ENCODE measurements at regions of chr5 and their contacts with region 1.

Region 1: DNA sequence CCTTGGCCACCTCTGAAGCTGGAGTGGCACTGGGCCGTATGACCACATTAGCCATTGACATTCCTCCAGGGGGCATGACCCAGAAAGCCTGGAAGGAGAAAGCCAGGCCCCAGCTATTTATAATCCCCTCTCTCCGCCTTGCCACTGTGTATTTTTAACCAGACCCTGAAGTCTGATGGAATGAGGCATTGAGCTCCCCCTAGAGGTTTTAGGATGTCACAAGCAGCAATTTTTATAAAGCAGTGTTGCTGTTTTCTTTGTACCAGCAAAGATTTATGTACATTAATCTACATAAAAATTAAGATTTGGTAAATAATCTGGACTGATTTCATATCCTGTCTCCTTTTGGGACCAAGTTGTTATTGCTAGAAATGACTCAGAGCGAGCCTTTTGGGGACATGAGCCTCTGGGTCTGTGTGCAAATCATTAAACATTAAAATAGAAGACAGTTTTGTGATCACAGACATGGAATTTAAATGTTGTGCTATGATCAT is 127.1 kb downstream of the TRIO start:
- DNase-seq: no peak
- H3K4me3 Mint-ChIP-seq: no peak overlapping the region
- H3K27ac Mint-ChIP-seq: no peak overlapping the region
- H3K4me1 Mint-ChIP-seq: no peaks in the 10 kb centered on the region
- H3K27me3 Mint-ChIP-seq: peaks cover 26% of the 10 kb centered on the region

Region 2: DNA sequence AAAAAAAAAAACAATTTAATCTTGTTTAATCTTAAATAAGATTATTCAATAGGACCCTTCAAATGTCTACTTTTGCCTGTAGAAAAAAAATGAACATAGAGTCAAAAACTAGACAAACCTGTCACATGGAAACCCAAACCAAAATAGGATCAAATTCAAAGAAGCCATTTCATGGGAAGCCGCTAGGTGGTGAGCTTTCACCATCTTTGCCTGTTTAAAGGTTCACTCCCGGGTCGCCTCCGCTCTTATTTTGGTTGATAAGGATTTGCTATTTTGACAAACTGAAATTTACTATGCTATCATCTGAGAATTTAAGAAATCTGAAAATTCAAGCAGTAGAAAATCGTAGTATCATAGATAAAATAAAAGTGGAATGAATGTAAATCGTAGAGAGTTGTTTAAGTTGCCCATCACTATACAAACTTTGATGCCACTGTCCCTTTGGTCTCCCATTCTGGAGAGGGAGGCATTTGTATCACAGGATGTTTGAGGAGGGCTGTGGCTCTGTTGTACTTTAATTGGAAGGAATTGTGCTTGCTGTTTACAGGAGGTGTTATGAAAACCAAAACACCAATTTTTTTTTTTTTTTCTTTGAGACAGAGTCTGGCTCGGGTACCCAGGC is 282.3 kb before region 1 on chr5:
- CTCF ChIA-PET with region 1: interaction called, 8 read pairs
- POLR2A ChIA-PET with region 1: no interaction called
- intact Hi-C with region 1: loop called (anchors 1 kb)
- DNase-seq: peak; percentile 43
- H3K4me3 Mint-ChIP-seq: no peak overlapping the region
- H3K27ac Mint-ChIP-seq: no peak overlapping the region
- H3K4me1 Mint-ChIP-seq: no peaks in the 10 kb centered on the region
- H3K27me3 Mint-ChIP-seq: no peaks in the 10 kb centered on the region

Region 3: DNA sequence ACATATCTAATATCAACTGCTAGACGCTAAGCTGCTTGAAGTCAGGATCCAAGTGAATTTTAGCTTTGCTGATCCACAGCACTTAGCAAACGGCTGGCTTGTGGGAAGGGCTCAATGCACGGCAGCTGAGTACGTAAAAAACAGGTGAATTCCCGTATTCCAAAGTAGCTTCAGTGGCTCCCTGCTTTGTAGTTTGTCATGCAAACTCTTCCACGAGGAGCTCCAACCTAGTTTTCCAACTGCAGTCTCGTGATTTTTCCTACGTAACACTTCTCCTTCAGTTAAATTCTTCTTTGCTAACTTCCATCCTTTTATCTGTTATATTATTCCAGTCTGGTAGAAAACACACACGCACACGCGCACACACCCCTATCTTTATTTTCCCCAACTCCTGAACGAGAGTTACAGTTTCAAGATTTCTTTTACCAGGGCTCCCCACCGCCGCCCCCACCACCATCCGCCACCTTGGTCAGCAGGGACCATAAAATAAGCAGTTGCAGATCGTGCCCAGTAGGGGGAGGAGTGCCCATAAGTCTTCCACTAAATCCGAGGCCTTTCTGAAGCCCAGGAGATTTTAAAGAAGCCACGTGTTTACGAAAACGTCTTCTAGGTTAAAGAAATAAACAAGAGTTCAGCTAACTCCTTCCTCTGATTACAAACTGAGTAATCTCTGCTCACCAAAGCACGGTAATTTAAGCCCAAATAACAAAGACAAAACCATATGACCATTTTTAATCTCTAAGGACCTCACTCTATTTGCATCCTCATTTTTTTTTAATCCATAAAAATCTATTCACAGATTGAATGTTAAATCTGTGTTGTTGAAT is 161.9 kb before region 1 on chr5:
- CTCF ChIA-PET with region 1: no interaction called
- POLR2A ChIA-PET with region 1: no interaction called
- intact Hi-C with region 1: loop called (anchors 2 kb)
- DNase-seq: peak; percentile 32
- H3K4me3 Mint-ChIP-seq: no peak overlapping the region
- H3K27ac Mint-ChIP-seq: no peak overlapping the region
- H3K4me1 Mint-ChIP-seq: peaks cover 17% of the 10 kb centered on the region
- H3K27me3 Mint-ChIP-seq: peaks cover 15% of the 10 kb centered on the region

Region 4: DNA sequence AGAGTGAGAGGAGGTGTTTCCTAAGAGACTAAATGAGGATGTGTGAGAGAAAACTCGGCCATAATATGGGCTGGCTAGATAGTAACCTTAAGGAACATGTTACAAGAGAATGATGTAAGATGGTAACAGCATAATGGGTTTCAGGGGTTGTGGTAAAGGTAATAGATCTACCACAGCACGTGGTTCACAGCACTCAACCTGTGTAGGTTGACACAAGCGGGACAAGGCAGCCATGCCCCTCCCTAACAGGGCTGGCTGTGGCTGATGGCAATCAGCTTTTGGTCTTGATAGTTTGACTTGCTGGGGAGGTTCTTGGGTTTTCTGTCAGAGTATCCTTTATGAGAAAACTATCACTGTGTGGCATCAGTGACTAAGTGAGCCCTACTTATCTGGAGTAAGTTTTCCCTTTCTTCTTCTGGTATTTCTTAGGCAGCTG is 11.5 kb after region 1 on chr5:
- CTCF ChIA-PET with region 1: interaction called, 13 read pairs
- POLR2A ChIA-PET with region 1: no interaction called
- intact Hi-C with region 1: no loop called
- DNase-seq: peak; percentile 17
- H3K4me3 Mint-ChIP-seq: no peak overlapping the region
- H3K27ac Mint-ChIP-seq: no peak overlapping the region
- H3K4me1 Mint-ChIP-seq: peaks cover 2% of the 10 kb centered on the region
- H3K27me3 Mint-ChIP-seq: peaks cover 7% of the 10 kb centered on the region